ENCODE measurements at regions of chr15 and their contacts with region 1.

Region 1: DNA sequence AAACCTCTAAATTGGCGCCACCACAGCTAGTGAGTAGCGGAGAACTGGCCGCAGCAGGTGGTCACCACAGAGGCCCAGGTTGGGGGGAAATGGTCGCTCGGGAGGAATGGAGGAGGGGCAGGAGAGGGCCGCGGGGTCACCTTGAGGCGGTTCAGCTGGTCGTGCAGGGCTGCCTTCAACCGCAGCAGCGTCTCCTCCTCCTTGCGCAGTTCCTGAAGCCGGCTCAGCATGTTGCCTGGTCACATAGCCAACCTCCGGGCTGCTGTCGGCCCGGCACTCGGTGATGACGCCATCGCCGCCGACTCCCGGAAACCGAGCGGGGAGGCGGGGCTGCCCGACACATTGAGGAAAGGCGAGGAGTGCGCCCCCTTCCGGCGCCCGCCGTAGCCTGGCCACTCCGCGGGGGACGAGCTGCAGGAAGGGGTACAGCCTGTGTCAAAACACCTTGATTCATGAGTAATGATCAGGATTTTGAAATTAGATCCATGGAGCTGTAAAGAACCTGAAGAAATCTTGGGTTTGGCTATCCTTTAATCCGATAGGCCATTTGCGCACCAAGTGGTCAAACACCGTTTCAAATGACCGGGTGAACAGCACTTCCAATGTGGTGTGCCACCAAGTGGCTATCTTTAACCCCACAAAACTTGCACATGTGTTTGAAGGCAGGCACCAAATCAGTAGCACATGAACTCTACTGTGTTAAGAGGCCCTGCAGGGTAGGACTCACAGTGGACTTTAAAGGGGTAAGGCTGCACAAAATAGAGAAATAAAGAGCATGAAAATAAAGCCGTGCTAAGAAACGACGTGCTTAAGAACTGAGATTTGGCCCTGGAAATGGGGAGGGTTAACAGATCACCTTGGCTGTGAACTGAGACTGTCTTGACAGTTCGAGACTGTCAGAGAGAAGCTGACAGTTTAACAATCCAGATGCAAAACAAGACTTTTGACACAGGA is at the start of gene SNAPC5:
- DNase-seq: peak; percentile 98 to 99
- ATAC-seq: peak; percentile 99
- H3K4me3 ChIP-seq: peak within 1 kb of the TSS; percentile 76 to 79
- H3K27ac ChIP-seq: peak within 1 kb of the TSS; percentile 52 to 67
- H3K4me1 ChIP-seq: no peaks in the 10 kb centered on the region
- H3K27me3 ChIP-seq: no peaks in the 10 kb centered on the region
- total RNA-seq, gene SNAPC5: 18.9 to 19.3 TPM

Region 2: GRCh38 chr15:66240240-66240794 is 257.5 kb before region 1 on chr15:
- intact Hi-C with region 1: no loop called
- DNase-seq: no peak
- ATAC-seq: no peak
- H3K4me3 ChIP-seq: no peak overlapping the region
- H3K27ac ChIP-seq: no peak overlapping the region
- H3K4me1 ChIP-seq: no peaks in the 10 kb centered on the region
- H3K27me3 ChIP-seq: no peaks in the 10 kb centered on the region

Region 3: GRCh38 chr15:66323312-66323928 is 174.4 kb before region 1 on chr15:
- intact Hi-C with region 1: no loop called
- DNase-seq: no peak
- ATAC-seq: no peak
- H3K4me3 ChIP-seq: no peak overlapping the region
- H3K27ac ChIP-seq: no peak overlapping the region
- H3K4me1 ChIP-seq: no peaks in the 10 kb centered on the region
- H3K27me3 ChIP-seq: no peaks in the 10 kb centered on the region

Region 4: GRCh38 chr15:66386204-66387123 is 111.3 kb before region 1 on chr15 and contains the start of gene MAP2K1:
- intact Hi-C with region 1: loop called (anchors 2 to 5 kb)
- DNase-seq: peak; percentile 99
- ATAC-seq: peak; percentile 98
- H3K4me3 ChIP-seq: peak within 1 kb of the TSS; percentile 87 to 94
- H3K27ac ChIP-seq: peak within 1 kb of the TSS; percentile 45 to 62
- H3K4me1 ChIP-seq: no peaks in the 10 kb centered on the region
- H3K27me3 ChIP-seq: no peaks in the 10 kb centered on the region
- total RNA-seq, gene MAP2K1: 49.7 to 57.7 TPM

Region 5: GRCh38 chr15:66578286-66578875 is 80.6 kb after region 1 on chr15:
- intact Hi-C with region 1: no loop called
- DNase-seq: peak in 1 of 2 donors; percentile 24
- ATAC-seq: no peak
- H3K4me3 ChIP-seq: no peak overlapping the region
- H3K27ac ChIP-seq: no peak overlapping the region
- H3K4me1 ChIP-seq: no peaks in the 10 kb centered on the region
- H3K27me3 ChIP-seq: no peaks in the 10 kb centered on the region

Region 6: DNA sequence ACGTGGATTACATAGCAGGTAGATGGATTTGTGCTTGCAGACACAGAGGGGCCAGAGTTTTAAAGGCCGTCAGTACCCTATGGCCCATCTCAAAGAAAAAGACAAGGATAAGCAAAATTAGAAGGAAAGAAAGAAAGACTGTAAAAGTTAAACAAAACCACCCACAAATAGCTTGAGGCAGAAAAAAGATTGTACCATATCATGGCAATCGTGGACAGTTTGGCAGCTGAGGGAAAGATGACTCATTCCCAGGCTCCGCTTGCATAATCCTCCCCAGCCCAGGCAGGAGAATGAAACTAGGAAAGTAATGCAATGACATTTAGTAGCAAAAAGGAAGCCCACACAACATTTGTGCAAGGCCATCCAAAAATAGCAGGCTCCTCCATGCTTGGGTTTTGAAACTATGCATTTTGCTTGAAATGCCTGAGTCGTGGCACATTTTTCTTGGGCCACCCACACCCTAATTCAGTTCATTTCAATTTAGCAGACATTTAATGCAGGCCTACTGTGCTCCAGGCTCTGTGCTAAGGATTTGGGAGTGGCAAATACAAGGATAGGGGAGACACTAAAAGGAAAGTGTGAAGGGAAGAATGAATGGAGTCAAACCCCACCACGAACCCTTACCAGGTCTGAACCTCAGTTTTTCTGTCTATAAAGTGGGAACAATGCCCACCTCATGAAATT is 526.7 kb after region 1 on chr15:
- intact Hi-C with region 1: no loop called
- DNase-seq: peak in 1 of 2 donors; percentile 89
- ATAC-seq: peak; percentile 92
- H3K4me3 ChIP-seq: no peak overlapping the region
- H3K27ac ChIP-seq: peak overlapping the region in 1 of 2 donors; percentile 78
- H3K4me1 ChIP-seq: peaks cover 3 to 9% of the 10 kb centered on the region in 2 donors
- H3K27me3 ChIP-seq: no peaks in the 10 kb centered on the region